HCT116 (cell line): ENCODE measurements at regions of chr10 and their contacts with region 1.

Region 1: GRCh38 chr10:104925232-104925851 is 284.3 kb downstream of the SORCS3 start:
- DNase-seq: peak; percentile 66
- ATAC-seq: peak; percentile 92
- H3K4me3 ChIP-seq: no peak overlapping the region
- H3K27ac ChIP-seq: no peak overlapping the region
- H3K4me1 ChIP-seq: no peaks in the 10 kb centered on the region
- H3K27me3 ChIP-seq: peaks cover 56% of the 10 kb centered on the region
- CTCF ChIP-seq: peak; percentile 68 to 94 (median 88)
- POLR2A ChIP-seq: no peak
- RAD21 ChIP-seq: peak; percentile 68

Region 2: DNA sequence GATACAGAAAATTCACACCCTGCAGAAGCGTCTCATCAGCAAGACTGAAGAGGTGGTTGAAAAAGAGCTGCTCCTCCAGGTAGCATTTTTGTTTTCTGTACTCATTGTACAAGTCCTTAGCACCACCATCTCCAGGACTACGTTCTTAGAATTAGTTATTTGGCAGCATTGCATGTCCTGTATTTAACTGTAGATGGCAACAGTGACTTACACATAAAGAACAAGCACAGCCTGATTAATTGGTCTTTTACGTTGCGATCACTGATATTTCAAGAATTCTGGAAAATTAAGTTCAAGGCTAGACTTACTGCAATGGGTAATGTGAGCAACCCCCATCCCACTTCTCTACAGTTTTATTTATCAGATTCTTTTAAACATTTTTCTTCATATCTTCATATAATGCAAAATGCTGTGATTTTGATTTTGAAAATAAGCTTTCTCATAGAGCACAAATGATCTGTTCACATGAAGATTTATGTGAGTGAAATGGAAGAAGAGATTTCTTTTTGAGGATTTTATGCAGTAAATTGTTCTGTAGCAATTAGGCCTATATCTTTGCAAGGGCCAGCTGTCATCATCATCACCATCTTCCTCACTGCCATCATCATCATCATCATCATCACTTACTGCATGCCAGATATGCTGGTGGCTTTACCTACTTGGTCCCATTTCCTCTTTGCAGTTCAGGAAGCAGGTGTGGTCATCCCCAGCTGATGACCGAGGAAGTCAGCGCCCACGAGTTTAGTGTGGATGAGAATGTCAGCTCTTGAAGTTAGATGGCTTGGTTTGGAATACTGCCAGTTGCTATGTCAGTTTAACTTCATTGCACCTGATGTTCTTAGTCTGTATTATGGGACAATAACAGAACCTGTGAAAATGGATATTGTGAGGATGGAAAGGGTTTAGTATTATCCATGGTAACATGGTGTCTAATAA is 518.4 kb before region 1 on chr10:
- CTCF ChIA-PET with region 1: no interaction called
- POLR2A ChIA-PET with region 1: no interaction called
- RAD21 ChIA-PET with region 1: no interaction called
- intact Hi-C with region 1: loop called (anchors 5 kb)
- DNase-seq: peak; percentile 57
- ATAC-seq: peak; percentile 86
- H3K4me3 ChIP-seq: no peak overlapping the region
- H3K27ac ChIP-seq: no peak overlapping the region
- H3K4me1 ChIP-seq: no peaks in the 10 kb centered on the region
- H3K27me3 ChIP-seq: peaks cover 72% of the 10 kb centered on the region
- CTCF ChIP-seq: peak; percentile 65 to 80 (median 71); a peak in 5 of 6 replicates
- POLR2A ChIP-seq: no peak
- RAD21 ChIP-seq: peak; percentile 84

Region 3: DNA sequence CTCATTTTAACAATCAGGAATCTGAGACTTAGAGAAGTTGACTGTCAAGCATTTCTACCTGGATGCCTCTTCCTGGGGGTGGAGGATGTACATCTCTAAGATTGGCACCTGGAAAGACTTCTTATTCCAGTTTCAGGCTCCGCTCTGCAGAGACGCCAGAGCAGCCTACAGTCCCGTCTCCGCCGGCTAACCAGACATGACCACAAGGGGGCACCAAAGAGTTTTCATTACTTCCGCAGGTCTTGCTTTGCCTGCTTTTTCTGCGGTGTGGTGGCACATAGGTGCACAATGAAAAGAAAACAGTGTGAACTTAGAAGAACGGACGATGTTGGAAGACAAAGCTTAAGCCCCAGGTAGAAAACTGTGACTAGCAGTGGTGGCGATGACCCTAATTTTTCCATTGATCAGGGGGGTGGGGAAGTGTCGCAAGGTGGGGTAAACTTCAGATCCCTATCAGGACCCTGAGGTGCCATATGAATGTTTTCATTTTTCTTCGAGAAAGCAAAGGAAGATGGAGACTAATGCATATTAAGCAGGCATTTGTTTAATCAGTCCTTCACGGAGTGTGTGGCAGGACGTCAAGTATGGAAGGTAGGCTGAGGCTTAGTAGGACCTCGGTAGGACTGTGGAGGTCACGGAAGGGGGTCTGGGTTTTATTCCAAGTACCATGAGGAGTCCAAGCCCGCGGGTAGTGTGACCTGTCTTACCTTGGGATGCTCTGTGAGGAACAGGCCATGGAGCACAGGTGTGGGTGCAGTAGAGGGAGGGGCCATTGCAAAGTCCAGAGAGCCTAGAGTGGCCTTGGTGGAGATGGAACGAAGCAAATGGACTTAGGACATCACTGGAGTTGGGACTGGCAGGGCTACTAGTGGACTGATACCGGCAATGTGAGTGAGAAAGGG is 344.3 kb before region 1 on chr10:
- CTCF ChIA-PET with region 1: no interaction called
- POLR2A ChIA-PET with region 1: no interaction called
- RAD21 ChIA-PET with region 1: no interaction called
- intact Hi-C with region 1: loop called (anchors 5 kb)
- DNase-seq: peak; percentile 64
- ATAC-seq: peak; percentile 94
- H3K4me3 ChIP-seq: no peak overlapping the region
- H3K27ac ChIP-seq: no peak overlapping the region
- H3K4me1 ChIP-seq: peaks cover 0 to 4% of the 10 kb centered on the region in 2 experiments; a peak in 1 of 4 replicates
- H3K27me3 ChIP-seq: peaks cover 38% of the 10 kb centered on the region
- CTCF ChIP-seq: peak; percentile 80 to 99 (median 95)
- POLR2A ChIP-seq: no peak
- RAD21 ChIP-seq: peak; percentile 87

Region 4: GRCh38 chr10:104650072-104650471 is 275.3 kb before region 1 on chr10:
- CTCF ChIA-PET with region 1: no interaction called
- POLR2A ChIA-PET with region 1: no interaction called
- RAD21 ChIA-PET with region 1: no interaction called
- intact Hi-C with region 1: loop called (anchors 2 kb)
- DNase-seq: no peak
- ATAC-seq: peak; percentile 78
- H3K4me3 ChIP-seq: no peak overlapping the region
- H3K27ac ChIP-seq: no peak overlapping the region
- H3K4me1 ChIP-seq: no peaks in the 10 kb centered on the region
- H3K27me3 ChIP-seq: peaks cover 78% of the 10 kb centered on the region
- CTCF ChIP-seq: peak; percentile 38 to 58 (median 50); a peak in 5 of 6 replicates
- POLR2A ChIP-seq: no peak
- RAD21 ChIP-seq: peak; percentile 67

Region 5: GRCh38 chr10:104766341-104766740 is 159.0 kb before region 1 on chr10:
- CTCF ChIA-PET with region 1: interaction called, 26 read pairs
- POLR2A ChIA-PET with region 1: no interaction called
- RAD21 ChIA-PET with region 1: interaction called in 1 of 2 experiments, 4 read pairs
- intact Hi-C with region 1: loop called (anchors 1 kb)
- DNase-seq: peak; percentile 67
- ATAC-seq: peak; percentile 90
- H3K4me3 ChIP-seq: no peak overlapping the region
- H3K27ac ChIP-seq: no peak overlapping the region
- H3K4me1 ChIP-seq: peaks cover 0 to 13% of the 10 kb centered on the region in 2 experiments; a peak in 2 of 4 replicates
- H3K27me3 ChIP-seq: peaks cover 45% of the 10 kb centered on the region
- CTCF ChIP-seq: no peak
- POLR2A ChIP-seq: no peak
- RAD21 ChIP-seq: no peak

Region 6: GRCh38 chr10:104937572-104937971 is 12.2 kb after region 1 on chr10:
- CTCF ChIA-PET with region 1: no interaction called
- POLR2A ChIA-PET with region 1: no interaction called
- RAD21 ChIA-PET with region 1: no interaction called
- intact Hi-C with region 1: no loop called
- DNase-seq: peak; percentile 93
- ATAC-seq: peak; percentile 95
- H3K4me3 ChIP-seq: 0 out of 4 replicates have a peak overlapping the region, but pooled peaks of 1 of the 2 experiments have one; percentile 11
- H3K27ac ChIP-seq: no peak overlapping the region
- H3K4me1 ChIP-seq: peaks cover 17 to 23% of the 10 kb centered on the region in 2 experiments
- H3K27me3 ChIP-seq: no peaks in the 10 kb centered on the region
- CTCF ChIP-seq: no peak
- POLR2A ChIP-seq: no peak
- RAD21 ChIP-seq: no peak